Dendritic cell treated with granulocyte-macrophage colony-stimulating factor and Interleukin-4, amounts not matched to agents 40 ng/mL and 50 ng/mL, for 4 days (primary cell): ENCODE measurements at regions of chr16 and their contacts with region 1.

Region 1: DNA sequence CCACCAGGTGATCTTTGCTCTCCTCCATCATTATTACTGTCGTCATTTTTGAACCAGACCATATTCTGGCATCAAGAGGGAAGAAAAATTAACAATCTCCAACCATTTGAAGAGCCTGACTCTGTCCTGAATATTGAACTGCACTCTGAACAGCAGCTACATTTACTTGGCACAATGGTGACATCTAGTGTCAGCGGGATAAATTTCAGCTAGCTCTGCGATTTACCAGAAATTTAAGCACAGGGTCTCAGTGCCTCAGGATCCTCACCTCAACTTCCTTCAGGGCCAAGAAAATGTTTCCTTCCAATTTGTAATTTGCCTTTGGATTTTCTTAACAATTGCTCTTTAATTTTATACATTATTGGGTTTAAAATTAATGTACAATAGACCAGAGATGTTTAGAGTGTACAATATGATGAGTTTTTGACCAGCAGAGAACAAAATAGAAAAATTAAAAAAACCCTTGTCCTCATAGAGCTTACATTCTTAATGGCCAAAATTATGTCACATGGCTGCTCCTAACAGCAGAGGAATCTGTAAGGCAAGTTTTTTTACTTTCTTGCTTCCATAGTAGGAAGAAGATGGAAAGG is 10.7 kb upstream of the ZNF19 start:
- H3K4me3 Mint-ChIP-seq: no peak overlapping the region
- H3K27ac Mint-ChIP-seq: no peak overlapping the region
- H3K4me1 Mint-ChIP-seq: no peaks in the 10 kb centered on the region
- H3K27me3 Mint-ChIP-seq: peaks cover 2% of the 10 kb centered on the region

Region 2: DNA sequence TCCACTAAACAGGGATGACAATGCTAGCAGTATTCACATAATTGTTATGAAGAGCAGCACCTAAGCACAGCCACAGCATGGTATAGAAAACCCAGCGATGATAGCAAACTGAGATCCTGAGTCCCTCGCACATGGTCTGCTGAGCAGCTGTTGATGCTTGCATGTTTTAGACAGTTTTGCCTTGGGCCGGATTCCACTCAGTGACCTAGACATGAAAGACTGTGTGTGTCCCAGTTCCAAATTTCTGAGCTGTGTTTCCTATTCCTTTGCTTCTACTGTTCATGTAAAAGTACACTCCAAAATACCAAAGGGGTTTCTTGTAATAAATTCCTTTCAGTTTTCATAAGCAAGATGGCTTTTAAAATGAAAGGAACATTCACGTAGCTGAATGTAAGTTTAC is 179.9 kb before region 1 on chr16:
- intact Hi-C with region 1: no loop called
- H3K4me3 Mint-ChIP-seq: no peak overlapping the region
- H3K27ac Mint-ChIP-seq: no peak overlapping the region
- H3K4me1 Mint-ChIP-seq: no peaks in the 10 kb centered on the region
- H3K27me3 Mint-ChIP-seq: peaks cover 3% of the 10 kb centered on the region

Region 3: DNA sequence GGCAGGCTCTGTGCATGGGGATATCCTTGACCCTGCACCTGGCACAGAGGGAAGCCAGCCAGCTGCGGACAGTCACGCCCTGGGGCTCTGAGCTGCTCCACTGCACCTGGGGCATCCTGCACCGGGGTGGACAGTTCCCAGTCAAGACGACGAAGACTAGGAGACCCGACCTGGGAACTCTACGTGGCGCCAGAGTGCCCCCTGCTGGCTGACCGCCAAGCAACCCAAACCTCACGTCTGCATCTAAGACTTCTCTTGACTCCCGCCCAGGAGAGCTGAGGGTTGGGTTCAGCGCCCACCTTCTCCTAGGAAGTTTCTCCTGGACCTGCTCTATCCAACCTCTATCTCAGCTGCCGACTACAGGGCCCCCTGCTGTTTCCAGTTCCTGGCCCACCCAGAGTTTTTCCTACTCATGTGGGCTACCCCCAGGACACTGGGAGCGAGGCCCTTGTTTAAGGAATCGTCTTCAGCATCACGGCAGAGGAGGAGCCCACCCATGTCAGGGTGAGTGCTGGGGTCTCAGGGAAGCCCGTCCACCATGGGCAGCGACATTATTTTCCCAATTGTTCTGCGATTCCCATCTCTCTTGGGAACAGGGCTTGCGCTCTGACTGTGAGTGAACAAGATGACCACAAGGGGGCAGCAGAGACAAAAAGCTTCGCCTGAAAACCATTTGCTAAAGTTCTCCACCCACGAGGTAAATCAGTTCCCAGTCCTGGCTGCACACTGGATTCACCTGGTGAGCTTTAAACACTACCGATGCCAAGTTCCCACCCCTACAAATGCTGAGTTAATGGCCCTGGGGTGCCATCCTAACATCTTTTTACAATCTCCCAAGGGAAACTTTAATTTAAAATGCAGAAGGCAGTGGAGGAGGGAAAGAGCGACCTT is 87.4 kb before region 1 on chr16:
- intact Hi-C with region 1: loop called (anchors 1 kb)
- H3K4me3 Mint-ChIP-seq: no peak overlapping the region
- H3K27ac Mint-ChIP-seq: no peak overlapping the region
- H3K4me1 Mint-ChIP-seq: no peaks in the 10 kb centered on the region
- H3K27me3 Mint-ChIP-seq: peaks cover 36% of the 10 kb centered on the region

Region 4: GRCh38 chr16:71461686-71462648 is 37.9 kb before region 1 on chr16 and contains the start of gene ZNF23:
- intact Hi-C with region 1: loop called (anchors 5 kb)
- H3K4me3 Mint-ChIP-seq: peak within 1 kb of the TSS; percentile 91
- H3K27ac Mint-ChIP-seq: peak within 1 kb of the TSS; percentile 81
- H3K4me1 Mint-ChIP-seq: peaks cover 5% of the 10 kb centered on the region
- H3K27me3 Mint-ChIP-seq: peaks cover 1% of the 10 kb centered on the region

Region 5: GRCh38 chr16:71610936-71611871 is 111.3 kb after region 1 on chr16:
- intact Hi-C with region 1: loop called (anchors 10 kb)
- H3K4me3 Mint-ChIP-seq: no peak overlapping the region
- H3K27ac Mint-ChIP-seq: no peak overlapping the region
- H3K4me1 Mint-ChIP-seq: no peaks in the 10 kb centered on the region
- H3K27me3 Mint-ChIP-seq: peaks cover 22% of the 10 kb centered on the region